CD4-positive, alpha-beta memory T cell (primary cell): ENCODE measurements at regions of chr2 and their contacts with region 1.

Region 1: GRCh38 chr2:233053928-233054784 is 6.0 kb upstream of the INPP5D start:
- DNase-seq: peak in 4 of 5 donors; percentile 50 to 66 (median 54)
- H3K4me3 ChIP-seq: no peak overlapping the region
- H3K4me3 Mint-ChIP-seq: peak overlapping the region in 3 of 8 donors; percentile 26 to 42 (median 26)
- H3K27ac ChIP-seq: no peak overlapping the region
- H3K27ac Mint-ChIP-seq: peak overlapping the region in 5 of 7 donors; percentile 29 to 71 (median 63)
- H3K4me1 ChIP-seq: peaks cover 11% of the 10 kb centered on the region
- H3K4me1 Mint-ChIP-seq: peaks cover 9 to 31% (median 17%) of the 10 kb centered on the region in 4 donors
- H3K27me3 ChIP-seq: no peaks in the 10 kb centered on the region
- H3K27me3 Mint-ChIP-seq: peaks cover 0 to 1% of the 10 kb centered on the region in 2 donors

Region 2: GRCh38 chr2:232854082-232854481 is 200.1 kb before region 1 on chr2:
- CTCF ChIA-PET with region 1: interaction called, 6 read pairs
- POLR2A ChIA-PET with region 1: interaction called, 3 read pairs
- intact Hi-C with region 1: loop called (anchors 10 kb)
- DNase-seq: no peak
- H3K4me3 ChIP-seq: no peak overlapping the region
- H3K4me3 Mint-ChIP-seq: no peak overlapping the region
- H3K27ac ChIP-seq: no peak overlapping the region
- H3K27ac Mint-ChIP-seq: peak overlapping the region in 1 of 7 donors; percentile 35
- H3K4me1 ChIP-seq: no peaks in the 10 kb centered on the region
- H3K4me1 Mint-ChIP-seq: no peaks in the 10 kb centered on the region
- H3K27me3 ChIP-seq: no peaks in the 10 kb centered on the region
- H3K27me3 Mint-ChIP-seq: no peaks in the 10 kb centered on the region

Region 3: DNA sequence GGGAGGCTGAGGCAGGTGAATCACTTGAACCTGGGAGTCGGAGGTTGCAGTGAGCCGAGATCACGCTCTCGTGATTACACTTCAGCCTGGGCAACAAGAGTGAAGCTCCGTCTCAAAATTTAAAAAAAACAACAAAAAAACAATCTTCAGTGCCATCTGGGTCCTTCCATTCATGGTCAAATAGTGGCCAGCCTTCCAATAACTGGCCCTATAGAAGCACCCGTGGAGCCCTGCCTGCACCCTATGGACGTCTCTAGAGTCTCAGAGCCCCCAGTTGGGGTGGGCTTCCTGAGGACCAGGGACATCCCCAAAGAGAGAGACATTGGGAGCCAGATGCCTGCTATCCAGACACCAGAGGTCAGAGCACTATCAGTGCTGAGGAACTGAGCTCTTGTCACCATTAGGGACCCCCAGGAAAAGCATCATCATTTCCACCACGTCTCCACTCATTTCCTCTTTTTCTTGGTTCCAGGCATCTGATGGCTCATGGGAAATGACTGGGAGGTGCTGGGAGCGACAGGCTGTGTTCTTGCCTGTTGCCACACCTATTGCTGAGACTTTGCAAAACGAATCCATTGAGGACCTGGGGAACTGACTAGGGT is 12.3 kb before region 1 on chr2:
- CTCF ChIA-PET with region 1: interaction called, 29 read pairs
- POLR2A ChIA-PET with region 1: no interaction called
- intact Hi-C with region 1: no loop called
- DNase-seq: no peak
- H3K4me3 ChIP-seq: no peak overlapping the region
- H3K4me3 Mint-ChIP-seq: no peak overlapping the region
- H3K27ac ChIP-seq: no peak overlapping the region
- H3K27ac Mint-ChIP-seq: peak overlapping the region in 1 of 7 donors; percentile 59
- H3K4me1 ChIP-seq: no peaks in the 10 kb centered on the region
- H3K4me1 Mint-ChIP-seq: no peaks in the 10 kb centered on the region
- H3K27me3 ChIP-seq: no peaks in the 10 kb centered on the region
- H3K27me3 Mint-ChIP-seq: peaks cover 6 to 7% of the 10 kb centered on the region in 2 donors

Region 4: DNA sequence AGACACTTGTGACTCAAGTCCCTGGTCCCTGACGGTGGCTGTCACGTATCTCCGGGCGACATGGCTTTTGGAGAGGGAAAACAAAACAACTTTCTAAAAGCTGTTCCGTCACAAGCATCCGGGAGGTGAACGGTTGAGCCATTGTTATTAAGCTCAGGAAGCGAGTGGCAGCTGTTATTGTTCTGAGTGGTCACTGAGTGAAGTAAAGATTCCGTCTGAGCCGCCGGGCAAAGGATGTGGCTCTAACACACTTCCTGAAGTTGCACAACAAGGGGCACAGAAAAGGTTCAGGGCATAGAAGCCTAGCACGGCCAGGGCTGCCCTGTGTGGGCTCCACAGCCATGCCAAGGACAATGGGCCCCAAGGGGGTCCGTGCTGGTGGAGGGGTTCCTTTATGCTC is 30.3 kb after region 1 on chr2:
- CTCF ChIA-PET with region 1: interaction called, 39 read pairs
- POLR2A ChIA-PET with region 1: interaction called, 426 read pairs
- intact Hi-C with region 1: no loop called
- DNase-seq: peak; percentile 55 to 87 (median 63)
- H3K4me3 ChIP-seq: no peak overlapping the region
- H3K4me3 Mint-ChIP-seq: peak overlapping the region; percentile 80 to 95 (median 84)
- H3K27ac ChIP-seq: peak overlapping the region; percentile 67
- H3K27ac Mint-ChIP-seq: peak overlapping the region in 6 of 7 donors; percentile 94 to 98 (median 97)
- H3K4me1 ChIP-seq: peaks cover 89% of the 10 kb centered on the region
- H3K4me1 Mint-ChIP-seq: peaks cover 73 to 99% (median 87%) of the 10 kb centered on the region in 4 donors
- H3K27me3 ChIP-seq: no peaks in the 10 kb centered on the region
- H3K27me3 Mint-ChIP-seq: peaks cover 0 to 1% of the 10 kb centered on the region in 2 donors

Region 5: GRCh38 chr2:233100192-233100998 is 46.2 kb after region 1 on chr2:
- CTCF ChIA-PET with region 1: interaction called, 63 read pairs
- POLR2A ChIA-PET with region 1: interaction called, 49 read pairs
- intact Hi-C with region 1: no loop called
- DNase-seq: peak; percentile 49 to 82 (median 59)
- H3K4me3 ChIP-seq: no peak overlapping the region
- H3K4me3 Mint-ChIP-seq: peak overlapping the region; percentile 43 to 88 (median 76)
- H3K27ac ChIP-seq: peak overlapping the region; percentile 41
- H3K27ac Mint-ChIP-seq: peak overlapping the region; percentile 77 to 96 (median 87)
- H3K4me1 ChIP-seq: peaks cover 64% of the 10 kb centered on the region
- H3K4me1 Mint-ChIP-seq: peaks cover 50 to 84% (median 66%) of the 10 kb centered on the region in 4 donors
- H3K27me3 ChIP-seq: no peaks in the 10 kb centered on the region
- H3K27me3 Mint-ChIP-seq: no peaks in the 10 kb centered on the region

Region 6: GRCh38 chr2:233129351-233129987 is 75.3 kb after region 1 on chr2:
- CTCF ChIA-PET with region 1: interaction called, 13 read pairs
- POLR2A ChIA-PET with region 1: no interaction called
- intact Hi-C with region 1: no loop called
- DNase-seq: no peak
- H3K4me3 ChIP-seq: no peak overlapping the region
- H3K4me3 Mint-ChIP-seq: peak overlapping the region in 3 of 8 donors; percentile 29 to 47 (median 35)
- H3K27ac ChIP-seq: no peak overlapping the region
- H3K27ac Mint-ChIP-seq: peak overlapping the region in 6 of 7 donors; percentile 48 to 88 (median 67)
- H3K4me1 ChIP-seq: peaks cover 12% of the 10 kb centered on the region
- H3K4me1 Mint-ChIP-seq: peaks cover 6 to 46% (median 24%) of the 10 kb centered on the region in 4 donors
- H3K27me3 ChIP-seq: no peaks in the 10 kb centered on the region
- H3K27me3 Mint-ChIP-seq: no peaks in the 10 kb centered on the region

Region 7: GRCh38 chr2:233267516-233268245 is 213.5 kb after region 1 on chr2:
- CTCF ChIA-PET with region 1: interaction called, 15 read pairs
- POLR2A ChIA-PET with region 1: interaction called, 4 read pairs
- intact Hi-C with region 1: no loop called
- DNase-seq: peak; percentile 90 to 96 (median 93)
- H3K4me3 ChIP-seq: peak overlapping the region in 1 of 2 donors; percentile 39
- H3K4me3 Mint-ChIP-seq: peak overlapping the region; percentile 52 to 89 (median 79)
- H3K27ac ChIP-seq: peak overlapping the region; percentile 81
- H3K27ac Mint-ChIP-seq: peak overlapping the region; percentile 96 to 99 (median 97)
- H3K4me1 ChIP-seq: peaks cover 68% of the 10 kb centered on the region
- H3K4me1 Mint-ChIP-seq: peaks cover 39 to 76% (median 64%) of the 10 kb centered on the region in 4 donors
- H3K27me3 ChIP-seq: no peaks in the 10 kb centered on the region
- H3K27me3 Mint-ChIP-seq: no peaks in the 10 kb centered on the region

Region 8: DNA sequence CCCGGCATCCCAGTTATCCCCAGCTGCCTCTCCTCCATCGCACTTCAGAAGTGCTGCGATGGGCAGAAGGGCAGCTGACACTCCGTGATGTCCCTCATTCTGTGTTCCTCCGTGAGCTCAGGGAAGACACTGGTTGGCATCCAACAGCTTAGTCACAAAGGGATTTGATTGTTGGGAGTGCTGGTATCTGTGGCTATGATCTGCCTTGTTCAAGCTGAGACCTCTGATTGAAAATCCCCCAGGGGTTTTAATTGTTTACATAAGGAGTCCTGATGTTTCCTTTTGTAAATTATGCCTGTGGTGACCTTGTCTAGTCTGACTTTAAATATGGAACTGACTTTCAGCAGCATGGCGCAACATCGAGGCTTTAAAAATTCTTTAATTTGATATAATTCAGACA is 234.6 kb after region 1 on chr2:
- CTCF ChIA-PET with region 1: no interaction called
- POLR2A ChIA-PET with region 1: no interaction called
- intact Hi-C with region 1: no loop called
- DNase-seq: no peak
- H3K4me3 ChIP-seq: no peak overlapping the region
- H3K4me3 Mint-ChIP-seq: no peak overlapping the region
- H3K27ac ChIP-seq: no peak overlapping the region
- H3K27ac Mint-ChIP-seq: peak overlapping the region in 5 of 7 donors; percentile 9 to 82 (median 61)
- H3K4me1 ChIP-seq: no peaks in the 10 kb centered on the region
- H3K4me1 Mint-ChIP-seq: peaks cover 0 to 9% (median 4%) of the 10 kb centered on the region in 4 donors
- H3K27me3 ChIP-seq: no peaks in the 10 kb centered on the region
- H3K27me3 Mint-ChIP-seq: no peaks in the 10 kb centered on the region